CD14-positive monocyte (primary cell): ENCODE measurements at regions of chr5 and their contacts with region 1.

Region 1: DNA sequence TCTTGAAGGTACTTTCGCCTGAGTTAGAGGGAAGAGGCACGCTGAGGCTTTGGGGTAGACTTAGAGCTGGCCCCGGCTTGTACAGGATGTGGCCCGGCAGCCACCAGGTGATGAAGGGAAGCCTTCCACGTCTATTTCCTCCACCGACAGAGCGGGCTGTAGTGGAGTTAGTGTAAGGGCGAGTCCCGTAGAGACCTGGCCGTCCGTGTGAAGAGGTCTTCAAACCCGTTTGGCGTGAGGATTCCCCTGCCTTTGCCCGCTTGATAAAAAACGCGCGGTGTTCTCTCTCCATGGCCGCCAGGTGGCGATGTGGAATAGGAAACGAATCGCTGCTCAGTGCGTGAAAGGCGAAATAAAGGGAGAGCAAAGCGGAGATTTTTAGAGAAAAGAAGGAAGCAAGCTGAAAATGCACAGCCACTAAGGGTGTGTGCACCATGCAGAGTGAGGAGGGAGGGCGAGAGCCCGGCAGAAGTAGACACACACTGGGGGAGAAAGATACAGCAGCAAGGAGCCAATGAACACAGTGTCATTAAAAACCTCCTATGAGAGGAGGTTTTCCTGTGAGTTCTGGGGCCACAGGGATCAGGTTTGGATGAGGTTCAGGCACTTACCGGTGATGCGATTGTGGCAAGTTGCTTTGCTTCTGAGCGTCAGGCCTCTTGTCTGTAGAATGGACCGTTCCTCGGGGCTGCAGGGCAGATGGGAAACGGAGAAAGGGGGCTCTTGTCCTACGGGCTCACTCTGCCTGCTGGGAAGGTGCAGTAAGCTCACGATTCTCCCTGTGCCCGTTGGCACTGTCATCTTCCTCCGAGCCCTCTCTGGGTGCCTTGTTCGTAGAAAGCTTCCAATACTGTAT is 34.2 kb downstream of the STC2 start:
- DNase-seq: peak; percentile 38 to 56 (median 43)
- H3K4me3 ChIP-seq: no peak overlapping the region
- H3K4me3 Mint-ChIP-seq: peak overlapping the region; percentile 25 to 82
- H3K27ac ChIP-seq: no peak overlapping the region
- H3K27ac Mint-ChIP-seq: no peak overlapping the region
- H3K4me1 ChIP-seq: no peaks in the 10 kb centered on the region
- H3K4me1 Mint-ChIP-seq: peaks cover 8% of the 10 kb centered on the region
- H3K27me3 ChIP-seq: peaks cover 10 to 43% of the 10 kb centered on the region in 2 donors
- H3K27me3 Mint-ChIP-seq: peaks cover 36 to 61% (median 48%) of the 10 kb centered on the region in 3 donors
- CTCF ChIP-seq: peak; percentile 86

Region 2: DNA sequence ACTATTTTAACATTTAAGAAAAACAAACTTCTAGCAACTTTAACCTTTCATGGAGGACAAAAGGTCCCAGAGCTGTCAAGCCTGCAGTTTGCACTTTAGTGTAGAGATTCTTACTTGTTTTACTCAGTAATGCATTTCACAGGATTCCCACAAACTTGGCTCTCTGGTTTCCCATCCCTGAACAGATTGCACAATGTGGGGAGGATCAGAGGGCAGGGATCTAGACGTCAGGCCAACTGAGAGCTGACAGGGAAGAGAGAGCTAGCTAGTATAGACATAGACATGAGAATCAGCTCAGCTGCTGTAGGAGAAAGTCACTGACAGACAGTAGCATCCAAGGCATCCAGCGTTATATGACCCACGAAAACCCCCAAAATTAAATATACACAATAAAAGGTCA is 170.6 kb before region 1 on chr5:
- intact Hi-C with region 1: no loop called
- DNase-seq: no peak
- H3K4me3 ChIP-seq: no peak overlapping the region
- H3K4me3 Mint-ChIP-seq: no peak overlapping the region
- H3K27ac ChIP-seq: no peak overlapping the region
- H3K27ac Mint-ChIP-seq: peak overlapping the region in 2 of 7 donors; percentile 28 to 33
- H3K4me1 ChIP-seq: no peaks in the 10 kb centered on the region
- H3K4me1 Mint-ChIP-seq: no peaks in the 10 kb centered on the region
- H3K27me3 ChIP-seq: no peaks in the 10 kb centered on the region
- H3K27me3 Mint-ChIP-seq: no peaks in the 10 kb centered on the region
- CTCF ChIP-seq: no peak

Region 3: GRCh38 chr5:173371400-173371799 is 77.4 kb after region 1 on chr5:
- intact Hi-C with region 1: no loop called
- DNase-seq: no peak
- H3K4me3 ChIP-seq: no peak overlapping the region
- H3K4me3 Mint-ChIP-seq: no peak overlapping the region
- H3K27ac ChIP-seq: no peak overlapping the region
- H3K27ac Mint-ChIP-seq: no peak overlapping the region
- H3K4me1 ChIP-seq: no peaks in the 10 kb centered on the region
- H3K4me1 Mint-ChIP-seq: no peaks in the 10 kb centered on the region
- H3K27me3 ChIP-seq: no peaks in the 10 kb centered on the region
- H3K27me3 Mint-ChIP-seq: peaks cover 1 to 13% (median 8%) of the 10 kb centered on the region in 3 donors
- CTCF ChIP-seq: no peak

Region 4: GRCh38 chr5:173573126-173573960 is 279.3 kb after region 1 on chr5:
- intact Hi-C with region 1: loop called (anchors 2 kb)
- DNase-seq: peak; percentile 30 to 59 (median 42)
- H3K4me3 ChIP-seq: no peak overlapping the region
- H3K4me3 Mint-ChIP-seq: peak overlapping the region in 1 of 2 donors; percentile 56
- H3K27ac ChIP-seq: no peak overlapping the region
- H3K27ac Mint-ChIP-seq: peak overlapping the region in 1 of 7 donors; percentile 48
- H3K4me1 ChIP-seq: no peaks in the 10 kb centered on the region
- H3K4me1 Mint-ChIP-seq: peaks cover 4% of the 10 kb centered on the region
- H3K27me3 ChIP-seq: peaks cover 6 to 16% of the 10 kb centered on the region in 2 donors
- H3K27me3 Mint-ChIP-seq: peaks cover 18 to 32% (median 26%) of the 10 kb centered on the region in 3 donors
- CTCF ChIP-seq: peak; percentile 95

Region 5: GRCh38 chr5:173972925-173973615 is 679.0 kb after region 1 on chr5:
- intact Hi-C with region 1: loop called in 1 of 2 experiments (anchors 10 kb)
- DNase-seq: peak; percentile 64 to 75 (median 75)
- H3K4me3 ChIP-seq: peak overlapping the region; percentile 25 to 73 (median 25)
- H3K4me3 Mint-ChIP-seq: peak overlapping the region; percentile 82 to 89
- H3K27ac ChIP-seq: no peak overlapping the region
- H3K27ac Mint-ChIP-seq: peak overlapping the region in 4 of 7 donors; percentile 15 to 56 (median 48)
- H3K4me1 ChIP-seq: peaks cover 11 to 14% of the 10 kb centered on the region in 2 donors
- H3K4me1 Mint-ChIP-seq: peaks cover 29% of the 10 kb centered on the region
- H3K27me3 ChIP-seq: peaks cover 2 to 16% of the 10 kb centered on the region in 2 donors
- H3K27me3 Mint-ChIP-seq: peaks cover 19 to 36% (median 22%) of the 10 kb centered on the region in 3 donors
- CTCF ChIP-seq: peak; percentile 84

Region 6: GRCh38 chr5:174311531-174312269 is 1017.7 kb after region 1 on chr5:
- intact Hi-C with region 1: loop called (anchors 10 kb)
- DNase-seq: peak; percentile 19 to 44 (median 23)
- H3K4me3 ChIP-seq: peak overlapping the region in 1 of 3 experiments; percentile 51
- H3K4me3 Mint-ChIP-seq: peak overlapping the region in 1 of 2 donors; percentile 72
- H3K27ac ChIP-seq: no peak overlapping the region
- H3K27ac Mint-ChIP-seq: no peak overlapping the region
- H3K4me1 ChIP-seq: peaks cover 0 to 3% of the 10 kb centered on the region in 2 donors
- H3K4me1 Mint-ChIP-seq: no peaks in the 10 kb centered on the region
- H3K27me3 ChIP-seq: peaks cover 2 to 30% of the 10 kb centered on the region in 2 donors
- H3K27me3 Mint-ChIP-seq: peaks cover 29 to 40% (median 32%) of the 10 kb centered on the region in 3 donors
- CTCF ChIP-seq: peak; percentile 87